Right cardiac atrium (tissue), 5 donors: ENCODE measurements at regions of chr1 and their contacts with region 1.

Region 1: DNA sequence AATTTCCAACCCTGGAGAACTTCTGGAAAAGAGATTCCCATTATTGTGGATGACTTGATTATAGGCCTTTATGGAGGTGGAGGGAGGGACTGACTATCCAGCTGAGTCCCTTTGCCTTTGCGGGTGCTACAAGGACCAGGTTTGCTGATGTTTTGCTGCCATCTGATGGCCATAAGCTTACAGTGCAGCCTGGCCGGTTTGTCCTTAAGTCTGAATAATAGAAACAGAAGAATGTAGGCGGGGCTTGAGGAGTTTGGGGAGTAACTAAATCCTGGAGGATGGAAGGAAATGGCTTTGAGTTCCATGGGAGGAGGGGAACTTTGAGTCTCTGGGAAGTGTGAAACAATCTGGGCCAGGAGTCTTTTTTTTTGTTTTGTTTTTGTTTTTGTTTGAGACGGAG is 55.7 kb upstream of the CD1D start:
- DNase-seq: peak; percentile 82 to 95 (median 88)
- ATAC-seq: peak; percentile 98
- H3K4me3 ChIP-seq: no peak overlapping the region
- H3K27ac ChIP-seq: no peak overlapping the region
- H3K4me1 ChIP-seq: no peaks in the 10 kb centered on the region
- H3K27me3 ChIP-seq: no peaks in the 10 kb centered on the region

Region 2: DNA sequence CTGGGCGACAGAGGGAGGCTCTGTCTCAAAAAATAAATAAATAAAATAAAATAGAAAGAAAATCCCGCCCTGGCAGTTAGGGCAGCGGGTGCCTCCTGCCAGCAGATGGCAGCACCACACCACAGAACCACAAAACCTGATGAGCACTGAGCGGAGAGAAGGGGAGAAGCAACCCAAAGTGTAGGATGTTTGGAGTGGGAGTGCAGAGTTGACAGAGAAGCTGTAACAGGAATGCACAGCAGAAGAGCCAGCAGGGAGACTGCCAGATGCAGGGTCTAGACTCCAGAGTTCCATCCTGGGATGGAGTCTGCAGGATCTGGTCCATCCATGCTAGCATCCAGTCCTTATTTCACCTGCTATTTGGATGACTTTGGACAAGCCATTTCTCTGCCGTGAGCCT is 161.3 kb before region 1 on chr1:
- intact Hi-C with region 1: loop called (anchors 2 to 10 kb)
- DNase-seq: peak; percentile 64 to 87 (median 84)
- ATAC-seq: peak; percentile 82 to 88
- H3K4me3 ChIP-seq: no peak overlapping the region
- H3K27ac ChIP-seq: no peak overlapping the region
- H3K4me1 ChIP-seq: no peaks in the 10 kb centered on the region
- H3K27me3 ChIP-seq: no peaks in the 10 kb centered on the region

Region 3: GRCh38 chr1:157969697-157970485 is 155.1 kb before region 1 on chr1:
- intact Hi-C with region 1: loop called in 3 of 4 experiments (anchors 5 to 10 kb)
- DNase-seq: peak in 1 of 3 donors; percentile 27
- ATAC-seq: peak; percentile 69 to 83
- H3K4me3 ChIP-seq: no peak overlapping the region
- H3K27ac ChIP-seq: no peak overlapping the region
- H3K4me1 ChIP-seq: no peaks in the 10 kb centered on the region
- H3K27me3 ChIP-seq: no peaks in the 10 kb centered on the region